Common myeloid progenitor, CD34-positive (primary cell): ENCODE measurements at regions of chrX and their contacts with region 1.

Region 1: GRCh38 chrX:119871599-119872395 is at the starts of genes NDUFA1 and RNF113A:
- DNase-seq: peak; percentile 82 to 94 (median 91)
- H3K4me3 ChIP-seq: peak within 1 kb of the TSS; percentile 72 to 93 (median 84)
- H3K27ac ChIP-seq: peak within 1 kb of the TSS; percentile 85 to 95
- H3K4me1 ChIP-seq: peaks cover 0 to 14% (median 10%) of the 10 kb centered on the region in 4 experiments
- H3K27me3 ChIP-seq: peaks cover 0 to 10% (median 0%) of the 10 kb centered on the region in 5 experiments

Region 2: DNA sequence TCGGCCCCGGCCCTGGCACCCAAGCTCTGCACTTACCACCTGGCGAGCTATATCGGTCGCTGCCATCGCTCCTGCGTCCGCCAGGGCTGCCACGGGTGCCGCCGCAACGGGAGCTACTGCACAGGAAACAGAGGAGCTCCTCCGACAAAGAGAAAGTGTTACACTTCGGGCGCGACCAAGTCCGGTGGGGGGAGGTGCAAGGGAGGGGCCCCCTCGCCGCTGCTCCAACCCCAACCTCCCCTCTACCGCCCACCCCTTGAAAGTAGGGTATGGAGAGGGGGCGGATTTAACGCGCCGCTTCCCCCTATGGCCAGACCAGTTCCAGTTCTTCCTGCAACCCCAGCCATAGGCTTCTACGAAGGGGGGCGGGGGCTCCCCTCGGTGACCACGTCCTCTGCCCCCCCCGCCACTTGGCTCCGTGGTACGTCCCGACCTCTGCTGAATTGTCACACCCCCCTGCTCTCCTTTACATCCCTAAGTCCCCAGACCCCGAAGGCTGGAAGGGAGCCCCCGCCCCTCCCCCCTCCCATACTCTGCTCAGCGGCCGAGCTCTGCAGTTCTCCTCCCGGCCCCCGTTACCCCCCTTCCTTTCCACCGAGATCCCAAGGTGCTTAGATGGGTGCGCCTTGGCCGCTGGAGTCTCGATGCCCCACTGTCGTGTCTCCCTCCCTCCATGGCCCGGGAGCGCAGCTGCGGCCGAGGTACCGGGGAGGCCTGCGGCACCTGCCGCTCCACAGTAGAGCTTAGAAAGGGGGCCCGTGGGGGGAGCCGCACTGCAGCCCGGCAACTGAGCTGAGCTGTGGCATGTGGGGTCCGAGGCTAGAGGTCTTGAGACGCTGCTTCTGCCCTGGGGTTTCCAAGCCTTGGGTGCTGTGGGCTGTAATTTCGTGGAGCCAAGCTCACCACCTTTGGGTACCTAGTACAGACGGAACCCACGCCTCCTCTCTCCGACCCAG is 178.5 kb before region 1 on chrX and contains the start of gene SEPTIN6:
- CTCF ChIA-PET with region 1: no interaction called
- POLR2A ChIA-PET with region 1: no interaction called
- DNase-seq: peak; percentile 90 to 97 (median 95)
- H3K4me3 ChIP-seq: peak within 1 kb of the TSS; percentile 74 to 90 (median 82)
- H3K27ac ChIP-seq: peak within 1 kb of the TSS; percentile 50 to 83
- H3K4me1 ChIP-seq: peaks cover 10 to 41% (median 29%) of the 10 kb centered on the region in 4 experiments
- H3K27me3 ChIP-seq: peaks cover 0 to 6% (median 0%) of the 10 kb centered on the region in 5 experiments

Region 3: DNA sequence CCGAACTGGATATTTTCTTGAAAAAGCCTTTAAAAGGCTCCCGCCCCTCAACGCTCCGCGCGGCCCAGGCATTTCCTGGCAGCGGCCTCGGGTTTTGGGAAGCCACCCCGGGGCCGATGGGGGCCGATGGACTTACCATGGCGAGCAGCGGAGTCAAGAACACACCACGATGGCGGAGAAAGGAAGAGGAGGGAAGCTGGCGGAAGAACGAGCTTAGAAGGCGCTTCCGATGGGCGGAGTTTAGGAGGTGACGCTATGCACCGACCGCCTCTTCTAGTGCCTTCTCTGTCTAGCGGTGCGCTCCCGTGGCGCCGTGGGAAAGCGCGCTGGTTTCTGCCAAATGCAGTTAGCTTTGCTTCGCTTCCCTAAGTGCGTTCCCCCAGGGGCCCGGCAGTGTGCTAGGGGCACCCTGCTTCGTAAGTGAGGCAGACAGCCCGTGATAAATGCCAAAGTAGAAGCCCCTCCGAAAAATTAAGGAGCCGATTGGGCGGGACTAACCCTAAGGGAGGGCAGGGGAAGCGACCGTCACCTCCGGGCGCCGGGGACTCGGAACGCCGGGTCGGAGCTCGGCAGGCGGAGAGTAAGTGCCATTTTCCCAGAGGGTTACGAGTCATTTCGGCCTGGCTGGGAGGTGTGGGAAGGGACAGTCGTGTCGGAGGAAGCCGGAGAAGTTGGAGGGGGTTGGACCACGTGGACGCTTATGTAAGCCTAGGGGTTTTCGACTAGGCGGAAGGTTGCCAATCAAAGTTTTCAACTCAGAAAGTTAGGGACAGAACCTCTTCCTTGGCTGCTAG is 80.2 kb before region 1 on chrX and contains the start of gene RPL39:
- CTCF ChIA-PET with region 1: interaction called, 4 read pairs
- POLR2A ChIA-PET with region 1: interaction called, 10 read pairs
- DNase-seq: peak; percentile 87 to 95 (median 93)
- H3K4me3 ChIP-seq: peak within 1 kb of the TSS; percentile 62 to 92 (median 82)
- H3K27ac ChIP-seq: peak within 1 kb of the TSS; percentile 88 to 94
- H3K4me1 ChIP-seq: peaks cover 5 to 34% (median 21%) of the 10 kb centered on the region in 4 experiments
- H3K27me3 ChIP-seq: peaks cover 0 to 2% (median 0%) of the 10 kb centered on the region in 5 experiments

Region 4: DNA sequence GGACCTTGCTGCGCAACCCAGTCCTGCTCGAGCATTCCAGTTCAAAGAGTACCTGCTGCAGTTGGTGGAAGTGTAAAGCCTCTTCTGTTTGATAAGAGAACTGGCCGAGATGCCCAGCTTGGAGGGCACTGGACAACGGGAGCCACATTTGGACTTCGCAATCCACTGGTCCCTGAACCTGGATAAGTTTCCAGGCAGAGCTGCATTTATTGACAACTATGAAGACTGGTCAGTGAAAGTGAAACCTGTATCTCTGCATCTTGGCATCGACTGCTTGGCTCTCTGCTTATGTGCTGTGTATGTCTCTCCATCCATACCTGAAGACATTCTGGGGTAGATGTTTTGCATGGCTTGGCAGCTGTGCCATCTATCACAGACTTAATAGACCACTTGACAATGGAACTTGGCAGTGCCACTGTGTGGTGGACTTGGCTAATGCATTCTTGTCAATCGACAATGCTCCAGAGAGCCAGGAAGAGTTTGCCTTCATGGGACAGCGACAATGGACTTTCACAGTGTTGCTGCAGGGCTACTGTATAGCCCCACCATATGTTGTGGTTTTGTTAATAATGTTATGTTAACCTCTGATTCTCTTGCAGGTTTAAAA is 335.3 kb after region 1 on chrX:
- CTCF ChIA-PET with region 1: no interaction called
- POLR2A ChIA-PET with region 1: no interaction called
- DNase-seq: no peak
- H3K4me3 ChIP-seq: no peak overlapping the region
- H3K27ac ChIP-seq: no peak overlapping the region
- H3K4me1 ChIP-seq: no peaks in the 10 kb centered on the region
- H3K27me3 ChIP-seq: peaks cover 0 to 9% (median 0%) of the 10 kb centered on the region in 5 experiments